Motor neuron (in vitro differentiated cells): ENCODE measurements at regions of chr14 and their contacts with region 1.

Region 1: DNA sequence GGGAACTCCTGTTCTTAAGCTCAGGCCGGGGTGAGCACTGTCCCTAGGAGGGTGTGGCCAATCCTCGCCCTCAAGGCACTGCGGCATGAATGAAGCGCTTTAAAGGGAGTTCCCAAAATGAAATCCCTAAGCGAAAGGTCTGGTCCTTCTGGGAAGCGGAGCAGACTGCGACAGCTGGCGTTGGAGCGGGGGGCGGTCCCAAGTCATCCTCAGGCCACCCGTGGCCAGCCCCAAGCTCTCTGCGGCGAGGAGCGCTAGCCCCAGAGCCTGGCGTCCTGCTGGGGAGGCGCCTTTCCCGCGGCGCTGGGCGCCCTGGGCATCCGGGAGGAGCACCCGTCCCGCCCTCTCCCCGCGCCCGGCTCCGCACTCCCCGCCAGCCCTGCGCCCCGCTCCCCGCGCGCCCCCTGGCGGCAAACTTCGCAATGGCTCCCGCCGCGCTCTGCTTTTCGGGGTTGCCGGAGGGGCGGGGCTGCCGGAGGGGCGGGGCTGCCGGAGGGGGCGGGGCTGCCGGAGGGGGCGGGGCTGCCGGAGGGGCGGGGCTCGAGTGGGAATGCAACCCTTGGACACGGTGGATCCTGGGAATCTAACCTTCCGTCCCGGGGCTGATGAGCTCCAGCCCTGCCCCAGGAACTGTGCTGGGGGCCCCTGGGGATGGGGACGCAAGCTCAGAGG is 25.4 kb downstream of the ZBTB42 start:
- ATAC-seq: peak; percentile 83 to 87 (median 86)
- H3K4me3 ChIP-seq: peak overlapping the region; percentile 37 to 52 (median 47)
- H3K27ac ChIP-seq: no peak overlapping the region
- H3K4me1 ChIP-seq: peaks cover 3 to 9% of the 10 kb centered on the region in 2 donors

Region 2: GRCh38 chr14:104768437-104769323 is 57.6 kb before region 1 on chr14:
- in situ Hi-C with region 1: loop called in 1 of 9 experiments (anchors 10 kb)
- ATAC-seq: peak; percentile 83 to 93 (median 90)
- H3K4me3 ChIP-seq: no peak overlapping the region
- H3K27ac ChIP-seq: peak overlapping the region; percentile 25 to 89
- H3K4me1 ChIP-seq: peaks cover 16% of the 10 kb centered on the region in 2 donors

Region 3: GRCh38 chr14:105314287-105315200 is 488.2 kb after region 1 on chr14 and contains the start of gene PACS2:
- in situ Hi-C with region 1: no loop called
- ATAC-seq: peak; percentile 62 to 76 (median 72)
- H3K4me3 ChIP-seq: peak within 1 kb of the TSS; percentile 75 to 98 (median 93)
- H3K27ac ChIP-seq: peak within 1 kb of the TSS; percentile 76 to 84
- H3K4me1 ChIP-seq: peaks cover 27 to 35% of the 10 kb centered on the region in 2 donors
- total RNA-seq, gene PACS2: 18.0 to 66.1 (median 49.7) TPM